HAP-1 (cell line): ENCODE measurements at regions of chr2 and their contacts with region 1.

Region 1: DNA sequence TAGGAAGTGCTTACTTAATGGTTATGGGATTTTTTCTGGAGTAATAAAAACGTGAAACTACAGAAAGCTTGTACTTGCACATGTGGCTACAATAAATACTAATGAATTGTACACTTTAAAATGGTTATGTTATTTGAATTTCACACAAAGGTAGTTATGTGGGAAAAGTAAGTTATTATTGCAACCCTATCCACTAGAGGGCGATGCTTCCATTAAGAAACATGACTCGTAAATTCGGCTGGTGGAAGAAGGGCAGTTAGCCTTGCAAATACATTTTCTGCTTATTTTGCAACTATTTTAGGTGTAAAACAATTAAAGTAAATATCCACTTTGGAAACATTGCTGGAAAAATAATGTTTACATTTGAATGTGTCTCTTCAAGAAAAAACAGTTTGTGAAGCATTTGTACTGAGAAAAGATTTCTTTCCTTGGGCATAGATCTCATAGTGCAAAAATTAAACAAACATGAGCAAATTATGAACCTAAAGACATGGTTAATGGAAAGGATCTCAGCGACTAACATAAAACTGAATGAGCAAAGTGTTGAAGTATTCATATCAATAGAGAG is 68.1 kb upstream of the CSRNP3 start:
- DNase-seq: peak; percentile 48 to 75
- H3K4me3 ChIP-seq: no peak overlapping the region
- H3K4me1 ChIP-seq: no peaks in the 10 kb centered on the region
- H3K27me3 ChIP-seq: no peaks in the 10 kb centered on the region; the same call in 1 of the 2 replicates

Region 2: GRCh38 chr2:165549619-165550018 is 148.2 kb after region 1 on chr2:
- in situ Hi-C with region 1: no loop called
- DNase-seq: peak; percentile 23 to 81
- H3K4me3 ChIP-seq: no peak overlapping the region
- H3K4me1 ChIP-seq: peaks cover 31% of the 10 kb centered on the region
- H3K27me3 ChIP-seq: no peaks in the 10 kb centered on the region

Region 3: DNA sequence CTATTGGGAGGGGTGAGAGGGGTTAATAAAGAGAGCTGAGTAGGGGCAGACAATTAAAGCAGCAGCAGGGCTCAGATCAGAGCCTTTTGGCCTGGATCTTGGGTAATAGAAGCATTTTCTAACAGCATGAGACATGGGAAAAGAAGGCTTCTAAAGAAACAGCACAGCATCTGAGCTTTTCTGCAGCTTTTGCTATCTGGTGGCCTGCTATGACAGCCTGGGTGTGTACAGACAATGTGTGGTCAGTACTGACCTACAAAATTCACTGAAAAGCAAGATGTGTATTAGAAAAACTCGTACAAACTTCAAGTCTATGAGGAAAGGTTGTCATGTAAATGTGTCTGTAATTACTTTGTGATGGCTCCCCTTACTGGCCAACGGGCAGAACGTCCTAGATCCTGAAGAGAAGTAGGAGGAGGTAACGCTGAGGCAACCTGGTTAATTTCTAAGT is 297.1 kb after region 1 on chr2:
- in situ Hi-C with region 1: loop called (anchors 25 kb)
- DNase-seq: peak; percentile 53 to 80
- H3K4me3 ChIP-seq: no peak overlapping the region
- H3K4me1 ChIP-seq: no peaks in the 10 kb centered on the region
- H3K27me3 ChIP-seq: no peaks in the 10 kb centered on the region; the same call in 1 of the 2 replicates